Activated naive CD4-positive, alpha-beta T cell treated with anti-CD3 and anti-CD28 coated beads for 36 hours (primary cell): ENCODE measurements at regions of chr2 and their contacts with region 1.

Region 1: GRCh38 chr2:190343500-190344275 is at the start of gene INPP1:
- DNase-seq: peak; percentile 52
- H3K4me3 Mint-ChIP-seq: peak within 1 kb of the TSS; percentile 80
- H3K27ac Mint-ChIP-seq: peak within 1 kb of the TSS; percentile 72
- H3K4me1 Mint-ChIP-seq: peaks cover 11% of the 10 kb centered on the region
- H3K27me3 Mint-ChIP-seq: peaks cover 2% of the 10 kb centered on the region
- total RNA-seq, gene INPP1: 6.3 to 7.0 TPM

Region 2: DNA sequence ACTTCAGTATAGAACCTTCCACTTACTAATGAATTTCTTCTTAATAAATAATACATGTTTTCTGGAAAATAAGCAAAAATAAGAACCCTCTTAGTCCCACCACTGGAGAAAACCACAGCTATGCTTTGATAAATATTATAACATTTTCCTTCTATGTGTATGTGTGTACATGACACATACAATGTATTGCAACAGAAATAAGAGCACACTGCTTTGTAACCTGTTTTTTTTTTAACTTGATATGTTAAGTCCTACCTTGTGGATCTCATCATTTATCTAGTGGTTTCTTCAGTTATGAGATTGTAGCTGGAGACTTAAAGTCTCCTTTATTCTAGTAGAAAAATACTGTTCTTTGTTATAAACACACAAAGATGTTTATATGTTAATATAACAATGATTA is 16.9 kb after region 1 on chr2:
- CTCF ChIA-PET with region 1: interaction called, 4 read pairs
- intact Hi-C with region 1: loop called (anchors 2 kb)
- DNase-seq: no peak
- H3K4me3 Mint-ChIP-seq: peak overlapping the region; percentile 79
- H3K27ac Mint-ChIP-seq: no peak overlapping the region
- H3K4me1 Mint-ChIP-seq: peaks cover 23% of the 10 kb centered on the region
- H3K27me3 Mint-ChIP-seq: no peaks in the 10 kb centered on the region

Region 3: GRCh38 chr2:190376591-190377245 is 33.0 kb after region 1 on chr2:
- CTCF ChIA-PET with region 1: interaction called, 3 read pairs
- intact Hi-C with region 1: loop called (anchors 1 kb)
- DNase-seq: no peak
- H3K4me3 Mint-ChIP-seq: no peak overlapping the region
- H3K27ac Mint-ChIP-seq: no peak overlapping the region
- H3K4me1 Mint-ChIP-seq: no peaks in the 10 kb centered on the region
- H3K27me3 Mint-ChIP-seq: no peaks in the 10 kb centered on the region

Region 4: DNA sequence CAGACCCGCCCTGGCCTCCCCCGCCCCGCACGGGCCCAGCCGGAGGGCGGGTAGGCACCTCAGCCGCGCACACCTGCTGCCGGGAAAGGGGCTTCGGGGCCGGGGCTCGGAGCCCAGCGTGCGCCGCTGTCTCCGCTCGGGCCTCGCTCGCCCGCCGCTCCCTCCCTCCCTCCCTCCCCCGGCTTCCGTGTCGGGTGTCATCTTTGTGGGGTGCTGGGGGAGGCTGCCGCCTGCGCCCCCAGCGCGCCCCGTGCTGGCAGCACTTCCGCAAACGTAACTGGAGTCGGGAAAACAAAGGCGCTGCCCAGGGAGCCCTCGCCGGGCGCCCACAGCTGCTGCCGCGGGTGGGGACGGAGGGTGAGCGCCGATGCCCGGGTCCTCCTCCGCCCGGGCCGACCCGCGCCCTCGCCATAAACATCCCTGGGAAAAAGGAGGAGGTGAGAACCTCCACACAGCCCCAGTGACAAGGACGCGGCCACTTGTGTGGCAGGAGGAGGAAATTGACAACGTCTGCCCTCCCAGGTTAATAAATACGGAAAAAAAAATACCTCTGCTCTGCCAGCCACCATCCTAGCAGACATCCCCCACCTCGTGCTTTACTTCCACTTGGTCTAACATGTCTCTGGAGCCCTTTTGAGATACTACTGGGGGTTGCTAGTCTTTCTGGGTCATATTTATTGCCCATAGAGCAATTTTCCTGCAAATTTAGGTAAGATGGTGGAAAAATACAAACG is 65.0 kb after region 1 on chr2:
- CTCF ChIA-PET with region 1: no interaction called
- intact Hi-C with region 1: loop called (anchors 2 kb)
- DNase-seq: peak; percentile 71
- H3K4me3 Mint-ChIP-seq: peak overlapping the region; percentile 84
- H3K27ac Mint-ChIP-seq: peak overlapping the region; percentile 90
- H3K4me1 Mint-ChIP-seq: peaks cover 46% of the 10 kb centered on the region
- H3K27me3 Mint-ChIP-seq: no peaks in the 10 kb centered on the region